ENCODE measurements at regions of chr11 and their contacts with region 1.

Region 1: DNA sequence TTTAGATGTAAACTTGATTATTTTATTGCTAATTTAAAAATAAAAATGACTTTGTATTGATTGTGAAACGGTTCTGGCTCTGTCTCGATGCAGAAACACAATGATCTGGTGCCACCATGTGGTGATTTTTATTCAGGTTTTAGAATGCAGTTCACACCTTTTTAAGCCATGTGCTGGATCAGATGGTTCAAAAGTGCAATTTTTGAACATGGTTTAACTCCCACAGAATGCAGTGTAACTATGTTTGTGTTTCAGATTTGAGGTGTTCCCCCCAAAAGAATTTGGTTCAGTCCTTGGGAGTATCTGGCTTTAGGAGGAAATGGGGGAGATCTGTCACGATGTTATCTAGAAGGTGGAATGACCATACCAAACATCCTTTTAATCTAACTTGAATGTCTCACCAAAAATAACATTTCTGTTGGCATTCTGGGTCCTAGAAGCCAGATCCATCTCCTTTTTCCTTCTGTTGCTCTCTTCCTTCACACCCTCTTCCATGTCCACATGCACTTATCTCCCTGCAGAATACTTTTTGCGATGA is 7.9 kb downstream of the MRPL16 start:
- ATAC-seq: peak in 7 of 8 experiments; percentile 48 to 88 (median 73)
- H3K4me3 ChIP-seq: no peak overlapping the region
- H3K27ac ChIP-seq: no peak overlapping the region
- H3K4me1 ChIP-seq: no peaks in the 10 kb centered on the region

Region 2: GRCh38 chr11:59753650-59754493 is 48.8 kb before region 1 on chr11:
- in situ Hi-C with region 1: loop called in 1 of 9 experiments (anchors 10 kb)
- ATAC-seq: peak; percentile 11 to 65 (median 28)
- H3K4me3 ChIP-seq: peak overlapping the region; percentile 64 to 91 (median 73)
- H3K27ac ChIP-seq: no peak overlapping the region
- H3K4me1 ChIP-seq: peaks cover 4 to 9% of the 10 kb centered on the region in 2 donors

Measured in motor neuron (in vitro differentiated cells).